H1 (cell line): ENCODE measurements at regions of chr10 and their contacts with region 1.

Region 1: DNA sequence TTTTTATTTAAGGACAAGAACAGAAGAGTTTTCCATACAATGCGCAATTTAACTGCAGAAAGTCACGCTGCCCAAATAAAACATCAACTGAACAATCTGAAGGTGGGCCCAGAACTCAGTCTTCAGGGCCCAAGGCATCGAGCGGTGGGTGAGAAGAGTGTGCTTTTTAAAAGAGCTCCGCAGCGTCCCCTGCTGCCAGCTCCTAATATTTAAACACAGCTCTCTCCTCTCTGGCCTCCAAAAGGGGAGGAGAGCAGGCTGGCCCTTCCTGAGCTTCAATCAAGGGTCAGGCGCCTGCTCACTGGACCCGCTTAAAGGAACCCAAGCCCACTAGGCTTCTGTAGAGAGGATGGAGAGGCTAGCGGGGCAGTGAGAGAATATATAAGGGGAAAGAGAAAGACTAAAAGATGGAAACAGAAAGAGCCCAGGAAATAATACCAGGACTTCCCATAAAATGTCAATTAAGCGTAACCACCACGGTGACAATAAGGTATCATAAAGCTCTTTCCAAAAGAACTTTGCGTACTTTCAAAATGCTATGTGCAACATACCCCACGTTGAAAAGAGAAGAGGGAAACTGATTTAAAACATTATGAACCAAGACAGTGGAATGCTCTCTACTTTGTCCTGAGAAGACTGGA is 2.8 kb downstream of the FAM53B start:
- DNase-seq: peak in 1 of 2 experiments; percentile 90
- H3K4me3 ChIP-seq: peak overlapping the region in 1 of 4 experiments; percentile 35; a peak in 1 of 8 replicates
- H3K27ac ChIP-seq: no peak overlapping the region
- H3K4me1 ChIP-seq: peaks cover 29 to 45% (median 32%) of the 10 kb centered on the region in 4 experiments
- H3K27me3 ChIP-seq: peaks cover 1 to 21% (median 14%) of the 10 kb centered on the region in 4 experiments; a peak in 6 of 7 replicates
- CTCF ChIP-seq: peak; percentile 53 to 82 (median 82)
- EP300 ChIP-seq: no peak
- POLR2A ChIP-seq: no peak
- RAD21 ChIP-seq: peak; percentile 72 to 79

Region 2: GRCh38 chr10:124539935-124540641 is 201.3 kb before region 1 on chr10:
- CTCF ChIA-PET with region 1: interaction called, 49 read pairs
- POLR2A ChIA-PET with region 1: no interaction called
- DNase-seq: peak; percentile 25 to 86
- H3K4me3 ChIP-seq: no peak overlapping the region
- H3K27ac ChIP-seq: no peak overlapping the region
- H3K4me1 ChIP-seq: peaks cover 0 to 12% (median 7%) of the 10 kb centered on the region in 4 experiments; a peak in 5 of 7 replicates
- H3K27me3 ChIP-seq: no peaks in the 10 kb centered on the region
- CTCF ChIP-seq: peak; percentile 71 to 72 (median 71)
- EP300 ChIP-seq: no peak
- POLR2A ChIP-seq: no peak
- RAD21 ChIP-seq: peak; percentile 77 to 85

Region 3: DNA sequence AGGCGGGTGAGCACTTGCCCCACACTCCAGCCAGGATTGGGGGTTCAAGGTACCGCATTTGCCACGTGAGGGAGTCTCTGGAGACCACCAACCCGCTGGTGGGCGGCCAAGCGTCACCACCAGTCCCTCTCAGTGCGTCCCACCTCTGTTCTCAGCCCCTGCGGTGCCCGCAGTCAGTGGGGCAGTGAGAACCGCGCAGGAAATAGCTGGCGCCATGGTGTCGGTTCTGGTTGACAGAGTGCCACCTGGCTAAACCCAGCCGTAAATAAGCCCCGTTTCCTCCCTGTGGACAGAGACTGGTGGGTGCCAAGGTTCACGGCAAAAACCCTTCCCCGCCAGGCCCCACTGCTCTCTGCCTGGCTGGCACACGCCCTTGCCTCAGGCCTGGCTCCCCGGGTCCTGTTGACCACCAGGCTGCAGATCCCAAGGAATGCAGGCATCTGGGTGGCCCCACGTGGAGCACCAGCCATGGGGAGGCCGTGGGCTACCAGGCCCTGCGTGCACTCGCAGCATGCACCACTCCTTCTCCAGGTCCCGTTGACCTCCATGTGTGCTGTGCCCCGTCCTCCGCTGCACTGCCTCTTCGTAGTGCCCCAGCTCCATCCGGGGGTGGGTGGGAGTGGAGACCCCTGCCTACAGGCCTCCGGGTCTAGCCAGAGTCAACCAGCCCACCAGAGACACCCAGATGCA is 139.8 kb before region 1 on chr10:
- CTCF ChIA-PET with region 1: interaction called, 15 read pairs
- POLR2A ChIA-PET with region 1: no interaction called
- DNase-seq: no peak
- H3K4me3 ChIP-seq: no peak overlapping the region
- H3K27ac ChIP-seq: no peak overlapping the region
- H3K4me1 ChIP-seq: no peaks in the 10 kb centered on the region
- H3K27me3 ChIP-seq: no peaks in the 10 kb centered on the region; a peak in 3 of 7 replicates
- CTCF ChIP-seq: no peak
- EP300 ChIP-seq: no peak
- POLR2A ChIP-seq: no peak
- RAD21 ChIP-seq: no peak

Region 4: GRCh38 chr10:124632064-124632531 is 109.3 kb before region 1 on chr10:
- CTCF ChIA-PET with region 1: interaction called, 20 read pairs
- POLR2A ChIA-PET with region 1: interaction called, 3 read pairs
- DNase-seq: no peak
- H3K4me3 ChIP-seq: no peak overlapping the region
- H3K27ac ChIP-seq: no peak overlapping the region
- H3K4me1 ChIP-seq: peaks cover 0 to 14% (median 2%) of the 10 kb centered on the region in 4 experiments; a peak in 6 of 7 replicates
- H3K27me3 ChIP-seq: no peaks in the 10 kb centered on the region; a peak in 1 of 7 replicates
- CTCF ChIP-seq: peak; percentile 61 to 68 (median 64)
- EP300 ChIP-seq: no peak
- POLR2A ChIP-seq: no peak
- RAD21 ChIP-seq: peak; percentile 72 to 81

Region 5: DNA sequence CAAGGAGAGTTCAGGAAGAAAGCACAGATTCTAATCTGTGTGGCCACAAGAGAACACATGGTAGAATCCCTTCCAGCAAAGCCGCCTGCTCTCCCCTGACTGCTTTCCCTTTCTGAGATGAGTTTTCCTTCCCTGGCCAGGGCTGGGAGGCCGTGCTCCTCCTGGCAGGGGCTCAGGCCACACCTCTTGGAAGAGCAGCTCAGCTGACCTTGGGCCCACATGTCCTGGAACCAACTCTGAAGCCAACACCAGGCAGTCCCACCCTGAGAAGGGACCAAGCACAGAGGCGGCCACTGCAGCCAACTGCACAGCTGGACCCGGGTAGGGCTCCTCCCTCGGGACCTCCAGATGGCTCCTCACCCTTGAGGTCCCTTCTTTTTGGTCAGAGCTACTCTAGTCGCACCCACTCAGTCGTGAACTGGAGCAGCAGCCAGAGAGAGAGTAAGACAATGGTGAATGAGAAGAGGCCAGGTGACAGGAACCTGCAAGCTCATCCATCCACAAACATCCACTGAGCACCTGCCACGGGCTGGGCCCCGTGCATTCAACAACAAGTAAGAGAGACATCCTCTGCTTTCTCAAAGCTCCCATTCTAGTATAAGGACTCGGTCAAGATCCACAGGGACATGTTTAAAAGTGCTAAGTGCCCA is 37.5 kb before region 1 on chr10:
- CTCF ChIA-PET with region 1: interaction called, 35 read pairs
- POLR2A ChIA-PET with region 1: interaction called, 3 read pairs
- DNase-seq: no peak
- H3K4me3 ChIP-seq: no peak overlapping the region
- H3K27ac ChIP-seq: no peak overlapping the region
- H3K4me1 ChIP-seq: peaks cover 3 to 15% (median 9%) of the 10 kb centered on the region in 4 experiments; a peak in 5 of 7 replicates
- H3K27me3 ChIP-seq: no peaks in the 10 kb centered on the region
- CTCF ChIP-seq: no peak
- EP300 ChIP-seq: no peak
- POLR2A ChIP-seq: no peak
- RAD21 ChIP-seq: no peak

Region 6: GRCh38 chr10:124755581-124755980 is 14.2 kb after region 1 on chr10:
- CTCF ChIA-PET with region 1: interaction called, 21 read pairs
- POLR2A ChIA-PET with region 1: interaction called, 13 read pairs
- DNase-seq: no peak
- H3K4me3 ChIP-seq: no peak overlapping the region
- H3K27ac ChIP-seq: no peak overlapping the region
- H3K4me1 ChIP-seq: peaks cover 0 to 10% (median 2%) of the 10 kb centered on the region in 4 experiments; a peak in 3 of 7 replicates
- H3K27me3 ChIP-seq: no peaks in the 10 kb centered on the region
- CTCF ChIP-seq: no peak
- EP300 ChIP-seq: no peak
- POLR2A ChIP-seq: no peak
- RAD21 ChIP-seq: no peak